Activated CD8-positive, alpha-beta T cell treated with anti-CD3 and anti-CD28 coated beads, Interleukin-2, amount 10 ng/mL, durations not matched to agents 7 days and 5 days (primary cell): ENCODE measurements at regions of chr22 and their contacts with region 1.

Region 1: DNA sequence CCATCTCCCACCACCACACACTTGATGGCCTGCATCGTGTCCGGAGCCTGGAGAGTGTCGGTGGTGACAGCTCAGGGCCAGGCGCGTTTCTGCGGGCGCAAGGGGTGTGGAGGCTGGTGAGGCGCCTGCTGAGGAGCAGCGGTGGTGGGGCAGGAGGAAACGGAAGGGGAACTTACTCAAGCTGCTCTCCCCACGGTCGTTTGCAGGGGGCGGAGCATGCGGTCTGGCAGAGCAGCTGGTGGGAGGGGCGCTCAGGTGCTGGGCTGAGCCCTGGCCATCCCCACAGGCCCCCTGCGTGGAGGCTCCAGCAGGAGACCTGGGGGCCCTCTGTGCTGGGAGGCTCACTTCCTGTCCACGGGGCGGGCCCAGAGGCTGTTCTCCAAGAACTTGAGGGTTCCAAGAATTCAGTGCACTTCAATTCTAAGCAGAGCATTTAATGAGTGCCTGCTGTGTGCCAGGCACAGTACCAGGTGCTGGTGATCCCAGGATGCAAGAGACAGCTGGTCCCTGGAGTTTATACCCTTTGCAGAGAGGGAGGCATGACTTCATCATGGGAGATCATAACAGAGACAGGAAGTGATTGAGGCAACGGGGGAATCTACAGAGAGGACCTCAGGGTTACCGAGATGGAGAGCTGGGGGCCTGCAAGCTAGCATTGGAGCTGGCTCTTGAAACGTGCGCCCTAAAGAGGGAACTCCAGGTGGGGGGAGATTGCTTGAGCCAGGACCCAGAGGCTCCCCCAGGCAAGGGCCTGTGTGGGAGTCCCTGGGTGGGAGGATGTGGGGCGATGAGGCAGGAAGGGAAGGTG is at the start of gene RAC2:
- DNase-seq: peak; percentile 98
- ATAC-seq: peak; percentile 62
- H3K4me3 Mint-ChIP-seq: peak within 1 kb of the TSS; percentile 99
- H3K27ac Mint-ChIP-seq: peak within 1 kb of the TSS; percentile 99
- H3K4me1 Mint-ChIP-seq: peaks cover 45% of the 10 kb centered on the region
- H3K27me3 Mint-ChIP-seq: no peaks in the 10 kb centered on the region
- total RNA-seq, gene RAC2: 1,167 to 1,252 TPM

Region 2: GRCh38 chr22:37121887-37122591 is 122.3 kb before region 1 on chr22:
- CTCF ChIA-PET with region 1: interaction called, 3 read pairs
- POLR2A ChIA-PET with region 1: interaction called, 22 read pairs
- DNase-seq: peak; percentile 97
- ATAC-seq: peak; percentile 98
- H3K4me3 Mint-ChIP-seq: peak overlapping the region; percentile 78
- H3K27ac Mint-ChIP-seq: peak overlapping the region; percentile 100
- H3K4me1 Mint-ChIP-seq: peaks cover 90% of the 10 kb centered on the region
- H3K27me3 Mint-ChIP-seq: no peaks in the 10 kb centered on the region

Region 3: GRCh38 chr22:37229805-37230672 is 14.3 kb before region 1 on chr22:
- CTCF ChIA-PET with region 1: interaction called, 66 read pairs
- POLR2A ChIA-PET with region 1: interaction called, 278 read pairs
- DNase-seq: peak; percentile 97
- ATAC-seq: peak; percentile 76
- H3K4me3 Mint-ChIP-seq: peak overlapping the region; percentile 80
- H3K27ac Mint-ChIP-seq: peak overlapping the region; percentile 100
- H3K4me1 Mint-ChIP-seq: peaks cover 90% of the 10 kb centered on the region
- H3K27me3 Mint-ChIP-seq: no peaks in the 10 kb centered on the region

Region 4: DNA sequence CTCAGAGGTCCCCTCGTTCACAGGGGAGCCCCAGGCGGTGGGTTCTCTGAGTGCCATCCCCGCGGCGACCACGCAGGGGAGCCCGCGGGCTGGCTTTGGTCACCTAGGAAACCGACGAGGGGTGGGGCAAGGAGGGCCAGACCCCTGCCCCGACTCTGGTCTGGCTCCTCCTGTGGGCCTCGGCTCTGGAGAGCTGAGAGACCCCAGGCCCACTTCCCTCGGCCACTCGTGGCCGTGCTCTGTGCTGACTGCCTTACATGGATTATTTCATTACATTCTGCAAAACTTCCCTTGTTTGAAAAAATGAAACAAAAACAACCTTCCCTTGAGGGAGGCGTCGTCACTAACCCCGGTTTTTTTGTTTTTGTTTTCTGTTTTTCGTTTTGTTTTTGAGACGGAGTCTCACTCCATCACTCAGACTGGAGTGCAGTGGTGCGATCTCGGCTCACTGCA is 22.8 kb after region 1 on chr22:
- CTCF ChIA-PET with region 1: interaction called, 195 read pairs
- POLR2A ChIA-PET with region 1: interaction called, 12 read pairs
- DNase-seq: peak; percentile 79
- ATAC-seq: peak; percentile 85
- H3K4me3 Mint-ChIP-seq: peak overlapping the region; percentile 76
- H3K27ac Mint-ChIP-seq: peak overlapping the region; percentile 86
- H3K4me1 Mint-ChIP-seq: peaks cover 37% of the 10 kb centered on the region
- H3K27me3 Mint-ChIP-seq: peaks cover 12% of the 10 kb centered on the region

Region 5: DNA sequence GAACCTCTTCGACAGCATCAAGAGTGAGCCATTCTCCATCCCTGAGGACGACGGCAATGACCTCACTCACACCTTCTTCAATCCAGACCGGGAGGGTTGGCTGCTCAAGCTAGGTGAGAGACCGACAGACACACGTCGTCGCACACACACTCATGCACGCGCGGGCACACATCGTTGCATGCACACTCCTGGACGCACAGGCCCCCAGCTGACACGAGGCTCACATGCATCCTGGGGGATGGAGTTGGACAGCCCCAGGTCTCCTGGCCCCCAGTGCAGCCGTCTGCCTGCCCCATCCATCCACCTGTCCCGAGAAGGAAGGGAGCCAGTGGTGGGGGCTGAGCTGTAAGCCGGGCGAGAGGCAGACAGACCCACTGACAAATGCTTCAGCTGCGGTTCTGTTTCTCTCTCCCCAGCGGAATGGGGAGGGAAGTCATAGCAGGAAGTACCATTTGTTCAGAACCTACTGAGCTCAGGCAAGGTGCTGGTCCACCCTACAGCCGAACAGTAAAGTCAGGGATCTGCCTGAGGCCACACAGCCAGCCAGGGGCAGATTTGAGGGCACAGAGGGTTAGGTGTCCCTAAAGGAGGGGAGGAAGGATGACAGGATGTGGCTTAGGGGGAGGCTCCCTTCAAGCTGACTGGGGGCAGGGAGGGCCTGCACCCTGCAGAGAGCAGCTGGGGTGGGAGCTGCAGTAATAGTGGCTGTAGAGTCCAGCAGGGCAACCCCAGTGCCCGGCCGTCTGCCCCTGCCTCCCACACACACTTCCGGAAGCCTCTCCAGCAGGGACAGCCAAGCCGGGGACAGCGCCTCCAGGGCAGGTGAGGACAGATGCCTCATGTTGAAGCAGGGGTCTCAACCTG is 65.1 kb after region 1 on chr22:
- CTCF ChIA-PET with region 1: interaction called, 4 read pairs
- POLR2A ChIA-PET with region 1: interaction called, 26 read pairs
- DNase-seq: peak; percentile 86
- ATAC-seq: peak; percentile 48
- H3K4me3 Mint-ChIP-seq: peak overlapping the region; percentile 45
- H3K27ac Mint-ChIP-seq: peak overlapping the region; percentile 96
- H3K4me1 Mint-ChIP-seq: peaks cover 95% of the 10 kb centered on the region
- H3K27me3 Mint-ChIP-seq: no peaks in the 10 kb centered on the region

Region 6: GRCh38 chr22:37416827-37417226 is 172.5 kb after region 1 on chr22:
- CTCF ChIA-PET with region 1: no interaction called
- POLR2A ChIA-PET with region 1: no interaction called
- DNase-seq: peak; percentile 78
- ATAC-seq: peak; percentile 75
- H3K4me3 Mint-ChIP-seq: peak overlapping the region; percentile 49
- H3K27ac Mint-ChIP-seq: peak overlapping the region; percentile 16
- H3K4me1 Mint-ChIP-seq: peaks cover 42% of the 10 kb centered on the region
- H3K27me3 Mint-ChIP-seq: peaks cover 70% of the 10 kb centered on the region